ENCODE measurements at regions of chr21 and their contacts with region 1.

Region 1: DNA sequence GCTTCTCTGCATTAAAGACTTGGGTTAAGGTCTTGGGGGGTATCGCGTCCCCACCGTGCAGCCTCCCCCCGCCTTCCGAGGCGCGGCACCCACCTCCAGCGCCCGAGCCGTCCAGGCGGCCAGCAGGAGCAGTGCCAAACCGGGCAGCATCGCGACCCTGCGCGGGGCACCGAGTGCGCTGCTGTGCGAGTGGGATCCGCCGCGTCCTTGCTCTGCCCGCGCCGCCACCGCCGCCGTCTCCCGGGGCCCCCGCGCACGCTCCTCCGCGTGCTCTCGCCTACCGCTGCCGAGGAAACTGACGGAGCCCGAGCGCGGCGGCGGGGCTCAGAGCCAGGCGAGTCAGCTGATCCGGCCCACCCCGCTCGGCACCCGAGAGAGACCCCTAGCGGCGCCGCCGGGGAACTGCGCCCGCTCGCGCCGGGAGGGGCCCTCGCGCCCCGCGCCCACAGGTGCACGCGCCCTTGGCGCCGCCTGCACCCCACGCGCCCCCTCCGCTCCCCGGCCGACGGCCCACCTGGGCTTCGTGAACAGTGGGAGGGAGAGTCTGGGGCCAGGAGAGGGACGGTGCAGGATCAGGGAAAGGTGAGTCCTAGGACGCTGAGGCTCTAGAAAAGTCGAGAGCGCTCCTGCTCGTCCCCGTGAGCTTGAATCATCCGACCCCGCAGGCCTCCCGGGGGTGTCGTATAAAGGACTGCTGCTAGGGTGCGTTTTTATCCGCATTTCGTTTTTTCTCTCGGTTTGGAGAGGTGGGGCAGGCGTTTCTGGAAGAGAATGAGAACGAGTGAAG is at the start of gene APP:
- DNase-seq: peak; percentile 89
- H3K4me3 ChIP-seq: peak within 1 kb of the TSS; percentile 95
- H3K27ac ChIP-seq: peak within 1 kb of the TSS; percentile 94
- H3K4me1 ChIP-seq: peaks cover 48% of the 10 kb centered on the region
- H3K27me3 ChIP-seq: no peaks in the 10 kb centered on the region
- CTCF ChIP-seq: peak; percentile 99
- total RNA-seq, gene APP: 332 TPM

Region 2: DNA sequence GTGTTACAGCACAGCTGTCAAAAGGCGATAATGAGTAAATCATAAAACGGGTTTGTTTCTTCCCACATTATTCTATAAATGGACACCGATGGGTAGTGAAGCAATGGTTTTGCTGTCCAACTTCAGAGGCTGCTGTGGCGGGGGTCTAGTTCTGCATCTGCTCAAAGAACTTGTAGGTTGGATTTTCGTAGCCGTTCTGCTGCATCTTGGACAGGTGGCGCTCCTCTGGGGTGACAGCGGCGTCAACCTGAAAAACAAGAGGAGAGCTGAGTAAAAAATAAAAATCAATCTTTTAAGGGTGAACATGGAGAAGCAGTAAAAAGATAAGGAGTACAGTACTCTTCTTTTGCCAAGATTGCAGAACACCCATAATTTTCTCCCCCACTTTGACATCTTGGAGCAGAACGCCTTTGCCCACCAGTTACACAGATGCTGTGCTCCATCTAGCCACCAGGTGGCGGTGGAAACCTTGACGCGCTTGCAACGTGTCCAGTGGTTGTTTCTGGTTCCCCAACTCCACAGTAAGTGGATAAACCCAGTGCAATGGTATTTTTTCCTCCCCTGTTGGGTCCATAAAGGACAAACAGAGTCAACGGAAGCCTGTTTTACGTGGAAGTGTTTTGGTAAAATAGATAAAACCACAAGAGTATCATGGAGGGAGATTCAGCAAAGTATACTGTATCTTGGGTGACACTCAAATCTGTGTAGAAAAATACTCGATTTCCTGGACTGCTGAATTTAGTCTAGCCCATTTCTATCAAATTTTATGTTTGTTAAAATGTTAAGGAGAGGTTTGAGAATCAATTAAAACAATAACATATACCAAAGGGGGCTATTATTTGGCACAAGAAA is 288.9 kb before region 1 on chr21:
- intact Hi-C with region 1: loop called (anchors 5 kb)
- DNase-seq: peak; percentile 53
- H3K4me3 ChIP-seq: no peak overlapping the region
- H3K27ac ChIP-seq: no peak overlapping the region
- H3K4me1 ChIP-seq: peaks cover 18% of the 10 kb centered on the region
- H3K27me3 ChIP-seq: no peaks in the 10 kb centered on the region
- CTCF ChIP-seq: peak; percentile 97

Region 3: DNA sequence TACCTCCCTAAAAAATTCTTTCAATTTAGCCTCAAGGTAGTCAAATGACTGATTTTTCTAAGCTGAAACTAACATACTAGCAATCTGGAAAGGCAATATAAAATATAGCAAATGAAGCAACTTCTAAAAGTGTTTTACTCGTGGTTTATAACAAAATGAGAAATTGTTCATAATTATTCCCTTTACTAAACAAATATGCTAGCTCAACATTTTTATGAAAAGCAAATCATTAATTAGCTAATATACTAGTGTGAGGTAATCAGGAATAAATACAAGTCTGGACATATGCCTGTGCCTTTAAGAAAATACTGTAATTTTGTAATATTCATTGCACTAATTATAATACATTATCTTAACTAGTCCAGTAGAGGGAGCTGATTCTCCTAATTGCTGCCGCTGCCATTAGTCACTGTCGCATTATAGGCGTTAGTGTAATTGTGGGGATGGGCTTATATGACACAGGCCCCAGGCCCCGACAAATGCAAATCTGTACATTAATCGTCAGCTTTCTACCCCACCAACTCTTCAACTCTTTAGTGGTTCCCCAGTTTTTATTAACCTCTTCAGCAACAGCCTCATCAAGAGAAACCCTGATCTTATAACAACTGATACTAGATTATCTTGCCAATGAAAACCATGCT is 275.0 kb before region 1 on chr21:
- intact Hi-C with region 1: loop called (anchors 5 kb)
- DNase-seq: no peak
- H3K4me3 ChIP-seq: no peak overlapping the region
- H3K27ac ChIP-seq: peak overlapping the region; percentile 25
- H3K4me1 ChIP-seq: peaks cover 37% of the 10 kb centered on the region
- H3K27me3 ChIP-seq: no peaks in the 10 kb centered on the region
- CTCF ChIP-seq: peak; percentile 69

Measured in left ventricle myocardium inferior (tissue), 1 donor.